Ovary (tissue), 10 donors: ENCODE measurements at regions of chr16 and their contacts with region 1.

Region 1: GRCh38 chr16:30534368-30535105 is at the start of gene ZNF747:
- DNase-seq: peak; percentile 92 to 96 (median 94)
- H3K4me3 ChIP-seq: peak within 1 kb of the TSS; percentile 64
- H3K27ac ChIP-seq: peak within 1 kb of the TSS; percentile 76 to 83
- H3K4me1 ChIP-seq: peaks cover 7% of the 10 kb centered on the region
- H3K27me3 ChIP-seq: no peaks in the 10 kb centered on the region
- CTCF ChIP-seq: peak in 1 of 3 donors; percentile 12
- EP300 ChIP-seq: no peak
- POLR2A ChIP-seq: peak; percentile 31
- total RNA-seq, gene ZNF747: 11.9 to 19.2 (median 12.9) TPM

Region 2: DNA sequence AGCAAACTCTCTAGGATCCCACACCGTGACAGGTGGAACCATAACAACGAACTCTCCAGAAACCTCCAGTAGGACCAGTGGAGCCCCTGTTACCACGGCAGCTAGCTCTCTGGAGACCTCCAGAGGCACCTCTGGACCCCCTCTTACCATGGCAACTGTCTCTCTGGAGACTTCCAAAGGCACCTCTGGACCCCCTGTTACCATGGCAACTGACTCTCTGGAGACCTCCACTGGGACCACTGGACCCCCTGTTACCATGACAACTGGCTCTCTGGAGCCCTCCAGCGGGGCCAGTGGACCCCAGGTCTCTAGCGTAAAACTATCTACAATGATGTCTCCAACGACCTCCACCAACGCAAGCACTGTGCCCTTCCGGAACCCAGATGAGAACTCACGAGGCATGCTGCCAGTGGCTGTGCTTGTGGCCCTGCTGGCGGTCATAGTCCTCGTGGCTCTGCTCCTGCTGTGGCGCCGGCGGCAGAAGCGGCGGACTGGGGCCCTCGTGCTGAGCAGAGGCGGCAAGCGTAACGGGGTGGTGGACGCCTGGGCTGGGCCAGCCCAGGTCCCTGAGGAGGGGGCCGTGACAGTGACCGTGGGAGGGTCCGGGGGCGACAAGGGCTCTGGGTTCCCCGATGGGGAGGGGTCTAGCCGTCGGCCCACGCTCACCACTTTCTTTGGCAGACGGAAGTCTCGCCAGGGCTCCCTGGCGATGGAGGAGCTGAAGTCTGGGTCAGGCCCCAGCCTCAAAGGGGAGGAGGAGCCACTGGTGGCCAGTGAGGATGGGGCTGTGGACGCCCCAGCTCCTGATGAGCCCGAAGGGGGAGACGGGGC is 870.2 kb before region 1 on chr16:
- intact Hi-C with region 1: no loop called
- DNase-seq: no peak
- H3K4me3 ChIP-seq: no peak overlapping the region
- H3K27ac ChIP-seq: no peak overlapping the region
- H3K4me1 ChIP-seq: peaks cover 5% of the 10 kb centered on the region
- H3K27me3 ChIP-seq: no peaks in the 10 kb centered on the region
- CTCF ChIP-seq: no peak
- EP300 ChIP-seq: no peak
- POLR2A ChIP-seq: no peak

Region 3: DNA sequence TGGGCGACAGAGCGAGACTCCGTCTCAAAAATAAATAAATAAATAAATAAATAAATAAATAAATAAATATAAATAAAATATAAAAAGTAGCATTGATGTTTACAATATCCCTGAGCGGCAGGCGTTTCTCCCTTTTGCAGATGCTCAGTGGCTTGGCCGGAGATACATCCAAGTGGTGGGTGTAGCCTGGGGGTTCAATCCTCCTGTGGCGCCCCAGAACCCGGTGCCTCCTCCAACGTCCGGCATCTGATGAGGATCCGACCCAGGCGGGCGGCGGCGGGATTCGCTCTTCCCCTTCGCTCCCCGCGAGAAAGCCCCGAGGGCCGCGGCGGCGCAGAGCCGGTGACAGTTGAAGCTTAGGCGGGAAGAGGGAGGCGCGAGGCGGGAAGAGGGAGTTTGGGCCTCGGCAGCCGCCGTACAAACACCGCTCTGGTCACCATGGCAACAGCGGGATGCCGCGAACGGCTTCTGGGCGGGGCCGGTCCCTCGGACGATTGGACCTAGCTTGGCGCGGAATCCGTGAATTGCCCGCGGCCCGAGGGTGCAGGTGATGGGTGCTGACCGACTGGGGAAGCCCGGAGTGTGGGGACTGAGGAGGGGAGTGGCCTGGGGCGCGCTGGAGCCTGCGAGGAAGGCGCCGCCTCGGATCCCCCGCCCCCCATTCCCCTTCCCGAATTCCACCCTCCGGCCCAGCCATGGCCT is 481.7 kb before region 1 on chr16:
- intact Hi-C with region 1: loop called in 1 of 4 experiments (anchors 10 kb)
- DNase-seq: peak; percentile 93 to 96 (median 95)
- H3K4me3 ChIP-seq: peak overlapping the region; percentile 57
- H3K27ac ChIP-seq: no peak overlapping the region
- H3K4me1 ChIP-seq: peaks cover 3% of the 10 kb centered on the region
- H3K27me3 ChIP-seq: no peaks in the 10 kb centered on the region
- CTCF ChIP-seq: no peak
- EP300 ChIP-seq: no peak
- POLR2A ChIP-seq: no peak

Region 4: GRCh38 chr16:30482366-30482765 is 52.2 kb before region 1 on chr16:
- intact Hi-C with region 1: no loop called
- DNase-seq: no peak
- H3K4me3 ChIP-seq: no peak overlapping the region
- H3K27ac ChIP-seq: no peak overlapping the region
- H3K4me1 ChIP-seq: no peaks in the 10 kb centered on the region
- H3K27me3 ChIP-seq: no peaks in the 10 kb centered on the region
- CTCF ChIP-seq: no peak
- EP300 ChIP-seq: no peak
- POLR2A ChIP-seq: no peak

Region 5: GRCh38 chr16:30582611-30583340 is 48.2 kb after region 1 on chr16:
- intact Hi-C with region 1: no loop called
- DNase-seq: peak in 1 of 5 donors; percentile 32
- H3K4me3 ChIP-seq: no peak overlapping the region
- H3K27ac ChIP-seq: no peak overlapping the region
- H3K4me1 ChIP-seq: peaks cover 5% of the 10 kb centered on the region
- H3K27me3 ChIP-seq: no peaks in the 10 kb centered on the region
- CTCF ChIP-seq: no peak
- EP300 ChIP-seq: no peak
- POLR2A ChIP-seq: no peak